Mammary epithelial cell (primary cell): ENCODE measurements at regions of chr18 and their contacts with region 1.

Region 1: GRCh38 chr18:45900623-45901022 is 66.5 kb downstream of the EPG5 start:
- DNase-seq: no peak
- H3K4me3 ChIP-seq: no peak overlapping the region
- H3K27ac ChIP-seq: no peak overlapping the region
- H3K4me1 ChIP-seq: no peaks in the 10 kb centered on the region
- H3K27me3 ChIP-seq: no peaks in the 10 kb centered on the region
- CTCF ChIP-seq: no peak

Region 2: DNA sequence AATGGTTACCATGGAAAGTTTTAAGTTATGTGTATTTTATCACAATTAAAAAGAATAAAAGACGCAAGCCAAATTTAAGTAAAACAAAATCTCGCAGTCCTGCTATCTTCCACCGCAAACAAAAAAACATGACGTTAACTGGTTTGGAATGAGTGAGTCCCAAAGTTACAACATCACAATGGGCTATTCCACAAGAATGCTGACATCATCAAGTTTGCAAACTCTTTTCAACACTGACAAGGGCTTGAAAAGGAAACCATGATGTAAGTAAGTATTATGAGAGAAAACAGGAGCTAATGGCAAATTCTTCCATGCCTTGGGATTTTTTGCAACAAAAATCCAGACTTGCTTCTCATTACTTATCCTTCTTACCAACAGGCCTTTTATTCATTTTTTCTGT is 44.1 kb before region 1 on chr18:
- CTCF ChIA-PET with region 1: no interaction called
- dilution Hi-C with region 1: no loop called
- in situ Hi-C with region 1: no loop called
- intact Hi-C with region 1: loop called (anchors 5 kb)
- DNase-seq: no peak
- H3K4me3 ChIP-seq: no peak overlapping the region
- H3K27ac ChIP-seq: no peak overlapping the region
- H3K4me1 ChIP-seq: no peaks in the 10 kb centered on the region
- H3K27me3 ChIP-seq: no peaks in the 10 kb centered on the region
- CTCF ChIP-seq: no peak

Region 3: DNA sequence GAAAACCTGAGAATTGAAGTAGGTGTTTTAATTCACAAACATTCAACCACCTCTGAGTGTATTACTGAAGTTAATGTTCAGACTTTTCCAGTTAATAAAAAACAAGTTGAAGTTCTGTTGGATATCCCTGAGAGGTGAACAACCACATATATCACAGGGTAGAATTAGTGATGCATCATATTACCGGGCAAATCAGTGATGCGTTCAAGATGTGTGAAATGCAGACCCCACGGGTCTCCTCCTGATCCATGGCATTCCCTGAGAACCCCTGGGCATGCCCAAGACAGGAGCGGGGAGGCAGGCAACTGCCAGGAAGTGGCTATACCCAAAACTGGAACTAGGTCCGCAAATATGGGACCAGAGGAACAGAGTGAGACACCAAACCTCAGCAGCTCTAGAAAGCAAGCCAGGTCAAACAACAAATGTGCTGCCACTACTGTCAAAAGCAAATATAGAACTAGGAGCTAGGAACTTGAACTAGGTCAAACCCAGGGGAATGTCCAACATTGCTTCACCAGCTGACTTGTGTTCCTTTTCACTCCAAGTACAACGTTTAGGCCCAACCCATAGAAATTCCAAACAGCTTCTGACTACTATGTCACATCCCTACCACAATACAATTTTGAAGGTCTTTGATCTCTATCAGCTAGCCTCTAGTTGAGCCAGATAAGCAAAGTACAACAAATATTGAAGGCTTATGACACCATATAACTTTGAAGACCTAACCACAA is 151.3 kb after region 1 on chr18:
- CTCF ChIA-PET with region 1: no interaction called
- dilution Hi-C with region 1: no loop called
- in situ Hi-C with region 1: no loop called
- intact Hi-C with region 1: no loop called
- DNase-seq: peak; percentile 94
- H3K4me3 ChIP-seq: no peak overlapping the region
- H3K27ac ChIP-seq: peak overlapping the region; percentile 46
- H3K4me1 ChIP-seq: peaks cover 21% of the 10 kb centered on the region
- H3K27me3 ChIP-seq: no peaks in the 10 kb centered on the region
- CTCF ChIP-seq: no peak